Naive thymus-derived CD8-positive, alpha-beta T cell (primary cell): ENCODE measurements at regions of chr1 and their contacts with region 1.

Region 1: GRCh38 chr1:205775015-205775716 is at the start of gene RAB29:
- DNase-seq: peak; percentile 71 to 93 (median 87)
- ATAC-seq: peak; percentile 87
- H3K4me3 Mint-ChIP-seq: peak within 1 kb of the TSS; percentile 89 to 99 (median 94)
- H3K27ac Mint-ChIP-seq: peak within 1 kb of the TSS; percentile 97 to 98 (median 98)
- H3K4me1 Mint-ChIP-seq: peaks cover 28 to 68% (median 61%) of the 10 kb centered on the region in 4 donors
- H3K27me3 Mint-ChIP-seq: no peaks in the 10 kb centered on the region
- polyA plus RNA-seq, gene RAB29: 71.3 to 113 (median 84.6) TPM

Region 2: DNA sequence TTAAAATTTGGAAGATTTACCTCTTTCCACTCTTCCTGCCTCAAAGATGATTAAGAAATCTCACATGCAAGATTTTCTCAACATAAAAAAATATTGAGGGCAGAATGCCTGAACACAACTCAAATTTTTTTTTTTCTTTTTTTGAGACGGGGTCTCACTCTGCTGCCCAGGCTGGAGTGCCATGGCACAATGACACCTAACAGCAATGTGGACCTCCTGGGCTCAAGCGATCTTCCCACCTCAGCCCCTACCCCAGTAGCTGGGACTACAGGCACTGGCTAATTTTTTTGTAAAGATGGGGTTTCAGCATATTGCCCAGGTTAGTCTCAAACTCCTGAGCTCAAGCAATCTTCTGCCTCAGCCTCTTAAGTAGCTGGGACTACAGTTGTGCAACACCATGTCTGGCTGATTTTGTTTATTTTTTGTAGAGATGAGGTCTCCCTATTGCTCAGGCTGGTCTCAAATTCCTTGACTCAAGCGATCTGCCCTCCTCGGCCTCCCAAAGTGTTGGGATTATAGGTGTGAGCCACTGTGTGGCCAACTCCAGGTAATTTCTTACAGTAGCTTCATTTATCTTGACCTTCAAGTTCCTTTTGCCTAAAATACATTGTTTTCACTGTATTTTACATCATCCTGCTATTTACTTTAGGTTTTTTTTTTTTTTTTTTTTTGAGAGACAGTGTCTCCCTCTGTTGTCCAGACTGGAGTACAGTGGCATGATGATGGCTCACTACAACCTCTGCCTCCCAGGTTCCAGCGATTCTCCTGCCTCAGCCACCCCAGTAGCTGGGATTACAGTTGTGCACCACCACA is 35.6 kb before region 1 on chr1:
- POLR2A ChIA-PET with region 1: no interaction called
- DNase-seq: no peak
- ATAC-seq: no peak
- H3K4me3 Mint-ChIP-seq: no peak overlapping the region
- H3K27ac Mint-ChIP-seq: peak overlapping the region in 7 of 10 donors; percentile 17 to 72 (median 26)
- H3K4me1 Mint-ChIP-seq: peaks cover 14 to 61% (median 51%) of the 10 kb centered on the region in 4 donors
- H3K27me3 Mint-ChIP-seq: no peaks in the 10 kb centered on the region

Region 3: DNA sequence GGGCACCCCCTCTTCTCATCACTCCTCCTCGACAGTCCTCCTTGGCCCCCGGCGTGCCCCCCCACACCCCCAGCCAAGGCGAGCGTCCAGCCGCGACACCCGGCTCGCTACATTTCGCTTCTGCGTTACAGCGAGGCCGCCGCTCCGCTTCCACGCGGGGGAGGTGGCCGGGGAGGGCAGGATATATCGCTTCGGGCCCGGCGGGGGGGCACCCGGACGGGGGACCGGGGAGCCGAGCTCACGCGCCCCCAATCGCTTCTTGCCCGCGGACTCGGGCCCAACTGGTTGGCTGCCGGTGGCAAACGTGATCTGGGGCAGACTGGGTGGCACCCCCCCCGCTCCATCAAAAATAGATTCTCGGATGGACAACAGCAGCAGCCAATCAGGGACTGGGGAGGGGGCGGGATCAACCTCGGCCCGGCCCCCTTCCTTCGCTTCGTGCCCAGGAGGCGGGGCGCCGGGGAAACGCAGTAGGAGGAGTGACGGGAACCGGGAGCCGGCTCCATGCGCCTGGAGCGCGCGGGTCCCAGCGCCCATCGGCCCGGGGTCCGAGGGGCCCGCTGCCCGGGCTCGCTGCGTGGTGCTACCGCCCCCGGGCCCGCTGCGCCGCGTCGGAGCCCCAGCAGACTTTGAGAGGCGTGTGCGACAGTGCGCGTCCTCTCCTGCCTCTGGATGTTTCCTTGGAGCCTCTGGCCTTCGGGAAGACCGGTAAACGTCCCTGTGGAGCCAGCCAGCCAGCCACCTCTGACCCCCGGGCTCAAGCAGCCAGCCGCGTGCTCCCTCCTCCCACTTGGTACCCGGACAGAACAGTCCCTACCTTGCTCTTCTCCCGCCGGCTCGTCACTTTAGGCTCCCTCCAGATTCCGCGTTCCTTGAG is 38.0 kb after region 1 on chr1 and contains the start of gene SLC41A1:
- POLR2A ChIA-PET with region 1: interaction called, 19 read pairs
- DNase-seq: peak; percentile 88 to 97 (median 93)
- ATAC-seq: peak; percentile 94 to 96
- H3K4me3 Mint-ChIP-seq: peak within 1 kb of the TSS; percentile 88 to 96 (median 94)
- H3K27ac Mint-ChIP-seq: peak within 1 kb of the TSS; percentile 84 to 95 (median 92)
- H3K4me1 Mint-ChIP-seq: peaks cover 37 to 63% (median 56%) of the 10 kb centered on the region in 4 donors
- H3K27me3 Mint-ChIP-seq: no peaks in the 10 kb centered on the region
- polyA plus RNA-seq, gene SLC41A1: 9.0 to 19.3 (median 13.1) TPM